IMR-90 (cell line): ENCODE measurements at regions of chr1 and their contacts with region 1.

Region 1: GRCh38 chr1:75785983-75786853 is at the start of gene RABGGTB:
- DNase-seq: peak; percentile 95
- ATAC-seq: peak; percentile 100
- H3K4me3 ChIP-seq: peak within 1 kb of the TSS; percentile 57
- H3K27ac ChIP-seq: peak within 1 kb of the TSS; percentile 81
- H3K4me1 ChIP-seq: peaks cover 2% of the 10 kb centered on the region; the same call in 1 of the 2 replicates
- H3K27me3 ChIP-seq: no peaks in the 10 kb centered on the region
- CTCF ChIP-seq: no peak
- POLR2A ChIP-seq: peak; percentile 99
- RAD21 ChIP-seq: peak; percentile 26; the same call in 1 of the 2 replicates
- total RNA-seq, gene RABGGTB: 48.2 and 120 TPM in 2 replicates

Region 2: GRCh38 chr1:75696000-75696399 is 90.2 kb before region 1 on chr1:
- CTCF ChIA-PET with region 1: no interaction called
- POLR2A ChIA-PET with region 1: no interaction called
- dilution Hi-C with region 1: no loop called
- in situ Hi-C with region 1: no loop called
- intact Hi-C with region 1: no loop called
- DNase-seq: no peak
- ATAC-seq: no peak
- H3K4me3 ChIP-seq: no peak overlapping the region
- H3K27ac ChIP-seq: no peak overlapping the region
- H3K4me1 ChIP-seq: no peaks in the 10 kb centered on the region
- H3K27me3 ChIP-seq: no peaks in the 10 kb centered on the region
- CTCF ChIP-seq: no peak
- POLR2A ChIP-seq: no peak
- RAD21 ChIP-seq: no peak

Region 3: GRCh38 chr1:75724472-75725022 is 61.7 kb before region 1 on chr1 and contains the start of gene ACADM:
- CTCF ChIA-PET with region 1: no interaction called
- POLR2A ChIA-PET with region 1: no interaction called
- dilution Hi-C with region 1: no loop called
- in situ Hi-C with region 1: loop called (anchors 10 kb)
- intact Hi-C with region 1: loop called (anchors 1 kb)
- DNase-seq: peak; percentile 68
- ATAC-seq: peak; percentile 99
- H3K4me3 ChIP-seq: peak within 1 kb of the TSS; percentile 96
- H3K27ac ChIP-seq: peak within 1 kb of the TSS; percentile 99
- H3K4me1 ChIP-seq: peaks cover 2% of the 10 kb centered on the region; the same call in 1 of the 2 replicates
- H3K27me3 ChIP-seq: no peaks in the 10 kb centered on the region
- CTCF ChIP-seq: no peak
- POLR2A ChIP-seq: peak; percentile 82
- RAD21 ChIP-seq: no peak
- total RNA-seq, gene ACADM: 8.6 and 21.9 TPM in 2 replicates

Region 4: DNA sequence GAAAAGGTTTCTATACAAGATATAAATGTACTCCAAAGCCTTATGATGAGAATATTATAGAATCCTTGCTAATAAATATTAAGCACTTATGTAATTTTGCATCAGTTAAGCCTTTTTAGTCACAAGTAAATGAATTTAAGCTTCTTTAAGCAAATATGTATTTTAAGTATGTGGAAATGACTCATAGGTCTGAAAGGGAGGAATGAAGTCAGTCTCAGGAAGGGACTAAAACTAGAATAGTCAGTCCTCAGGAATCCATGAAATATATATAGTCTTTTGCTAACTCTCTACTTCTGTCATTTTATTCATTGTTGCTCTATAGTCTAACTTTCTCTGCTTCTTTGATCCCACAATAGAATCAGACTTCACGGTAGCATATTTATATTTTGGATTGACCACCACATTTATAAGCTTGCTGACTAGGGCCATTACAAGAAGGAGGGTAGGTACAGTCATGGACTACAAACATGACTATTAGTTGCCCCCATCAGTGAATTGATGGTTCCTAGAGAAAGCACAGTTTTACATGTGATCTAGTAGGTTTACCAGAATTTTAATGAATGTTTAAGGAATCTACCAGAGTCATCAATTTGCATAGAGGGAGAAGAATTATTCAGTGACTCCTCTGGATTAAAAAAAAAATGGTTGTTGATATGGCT is 20.4 kb before region 1 on chr1:
- CTCF ChIA-PET with region 1: no interaction called
- POLR2A ChIA-PET with region 1: interaction called, 3 read pairs
- dilution Hi-C with region 1: no loop called
- in situ Hi-C with region 1: no loop called
- intact Hi-C with region 1: loop called (anchors 2 kb)
- DNase-seq: peak; percentile 89
- ATAC-seq: peak; percentile 94
- H3K4me3 ChIP-seq: no peak overlapping the region
- H3K27ac ChIP-seq: peak overlapping the region; percentile 85
- H3K4me1 ChIP-seq: no peaks in the 10 kb centered on the region; the same call in 1 of the 2 replicates
- H3K27me3 ChIP-seq: no peaks in the 10 kb centered on the region
- CTCF ChIP-seq: no peak
- POLR2A ChIP-seq: no peak
- RAD21 ChIP-seq: no peak